Panc1 (cell line): ENCODE measurements at regions of chr11 and their contacts with region 1.

Region 1: DNA sequence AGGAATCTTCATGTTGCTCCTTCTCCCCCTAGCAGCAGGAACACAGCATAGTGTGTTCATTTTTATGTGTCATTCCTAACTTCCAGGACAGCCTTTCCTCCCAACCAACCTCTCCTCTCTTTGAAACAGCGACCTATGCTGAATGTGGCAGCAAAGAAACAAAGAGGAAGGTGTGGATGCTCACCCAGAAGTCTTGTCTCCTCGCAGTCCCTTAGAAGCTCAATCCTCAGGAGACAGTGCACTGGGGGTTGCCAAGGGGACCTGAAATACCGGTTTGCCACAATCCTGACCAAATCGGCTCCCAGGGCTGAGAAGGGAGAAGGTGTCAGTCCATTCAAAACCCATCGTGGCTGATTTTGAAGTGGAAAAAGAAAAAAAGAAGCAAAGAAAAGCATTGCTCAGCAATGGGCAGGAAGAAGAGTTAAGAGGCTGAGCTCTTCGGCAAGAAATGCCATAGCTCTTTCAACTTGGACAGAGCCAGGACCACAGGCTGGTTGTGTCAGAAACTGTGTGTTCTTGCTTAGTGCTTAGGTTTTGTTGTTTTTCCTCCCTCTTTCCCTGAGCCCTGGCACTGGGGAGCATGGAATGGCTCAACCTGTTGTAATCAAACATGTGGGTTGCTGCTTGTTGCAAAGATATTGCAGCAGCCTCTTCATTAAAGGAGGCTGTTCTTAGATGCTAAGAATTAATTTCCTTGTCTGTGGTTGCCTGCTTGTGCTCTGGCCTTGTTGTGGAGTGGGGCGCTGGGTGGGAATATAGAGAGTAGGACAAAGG is 30.4 kb upstream of the TENM4 start:
- DNase-seq: no peak
- ATAC-seq: no peak
- H3K4me3 ChIP-seq: no peak overlapping the region
- H3K27ac ChIP-seq: no peak overlapping the region
- H3K4me1 ChIP-seq: no peaks in the 10 kb centered on the region
- H3K27me3 ChIP-seq: no peaks in the 10 kb centered on the region
- CTCF ChIP-seq: no peak

Region 2: DNA sequence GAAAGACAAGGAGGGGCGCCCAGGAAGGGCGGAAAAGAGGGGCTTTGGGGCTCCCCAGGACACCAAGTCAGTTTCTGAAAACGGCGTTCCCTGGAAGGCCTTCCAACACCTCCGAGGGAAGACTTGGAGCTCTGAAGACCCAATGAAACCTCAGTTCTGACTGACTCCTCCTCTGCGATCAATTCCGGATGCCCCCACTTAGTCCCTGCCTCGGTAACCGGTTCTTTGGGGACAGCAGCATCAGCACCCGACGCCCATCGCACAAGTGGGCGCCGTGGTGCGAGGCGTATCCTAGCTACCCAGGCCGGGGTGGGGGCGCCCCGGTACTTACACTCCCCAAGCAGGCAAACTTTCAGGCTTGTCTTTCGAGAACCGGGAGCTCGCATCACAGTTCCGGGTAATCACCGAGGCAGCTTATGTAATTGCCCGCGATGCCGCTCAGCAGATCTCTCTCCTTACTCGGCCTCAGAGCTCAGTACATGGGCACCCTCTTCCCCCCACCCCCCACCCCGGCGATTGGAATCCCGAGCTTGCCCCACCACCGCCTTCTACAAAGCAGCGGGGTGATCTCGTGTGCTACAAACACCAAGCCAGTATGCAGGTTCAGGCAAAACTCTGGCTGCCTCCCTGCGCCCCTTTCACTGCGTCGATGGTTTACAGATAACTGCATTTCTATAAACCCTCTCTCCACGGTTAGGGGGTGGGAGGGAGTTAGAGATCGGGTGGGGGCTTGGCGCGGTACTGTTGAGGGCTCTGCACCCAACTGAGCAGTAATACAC is 32.4 kb before region 1 on chr11:
- CTCF ChIA-PET with region 1: interaction called, 11 read pairs
- POLR2A ChIA-PET with region 1: no interaction called
- in situ Hi-C with region 1: no loop called
- intact Hi-C with region 1: no loop called
- DNase-seq: no peak
- ATAC-seq: no peak
- H3K4me3 ChIP-seq: peak overlapping the region; percentile 42 to 43; a peak in 3 of 4 replicates
- H3K27ac ChIP-seq: no peak overlapping the region
- H3K4me1 ChIP-seq: peaks cover 19% of the 10 kb centered on the region
- H3K27me3 ChIP-seq: peaks cover 68% of the 10 kb centered on the region
- CTCF ChIP-seq: no peak

Region 3: DNA sequence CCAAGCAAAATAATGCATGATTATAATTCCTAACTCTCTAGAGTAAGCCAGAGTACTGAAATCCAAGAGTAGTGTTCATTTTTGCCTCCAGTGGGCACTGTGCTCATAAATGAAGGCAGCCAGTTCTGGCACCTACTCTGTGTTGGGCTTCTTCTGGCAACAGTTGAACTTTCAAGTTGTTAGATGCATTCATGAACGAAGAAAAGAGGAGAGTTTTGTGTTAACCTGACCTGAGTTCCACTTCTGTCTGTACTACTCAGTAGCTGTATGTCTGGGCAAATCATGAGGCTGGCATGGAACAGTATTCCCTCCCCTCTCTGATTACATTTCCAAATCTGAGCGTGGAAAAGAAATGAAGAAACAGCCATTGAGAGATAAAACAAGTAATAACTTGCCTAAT is 10.1 kb before region 1 on chr11:
- CTCF ChIA-PET with region 1: no interaction called
- POLR2A ChIA-PET with region 1: no interaction called
- in situ Hi-C with region 1: no loop called
- intact Hi-C with region 1: no loop called
- DNase-seq: peak; percentile 5
- ATAC-seq: peak; percentile 84
- H3K4me3 ChIP-seq: no peak overlapping the region
- H3K27ac ChIP-seq: no peak overlapping the region
- H3K4me1 ChIP-seq: no peaks in the 10 kb centered on the region
- H3K27me3 ChIP-seq: peaks cover 4% of the 10 kb centered on the region; the same call in 1 of the 2 replicates
- CTCF ChIP-seq: peak; percentile 70

Region 4: GRCh38 chr11:79493555-79494171 is 22.4 kb after region 1 on chr11:
- CTCF ChIA-PET with region 1: no interaction called
- POLR2A ChIA-PET with region 1: no interaction called
- in situ Hi-C with region 1: no loop called
- intact Hi-C with region 1: no loop called
- DNase-seq: peak; percentile 48
- ATAC-seq: peak; percentile 95
- H3K4me3 ChIP-seq: no peak overlapping the region
- H3K27ac ChIP-seq: no peak overlapping the region
- H3K4me1 ChIP-seq: no peaks in the 10 kb centered on the region
- H3K27me3 ChIP-seq: peaks cover 3% of the 10 kb centered on the region; the same call in 1 of the 2 replicates
- CTCF ChIP-seq: peak; percentile 98